H1 (cell line): ENCODE measurements at regions of chr14 and their contacts with region 1.

Region 1: GRCh38 chr14:77245820-77246219 is 25.2 kb downstream of the NGB start:
- DNase-seq: no peak
- H3K4me3 ChIP-seq: no peak overlapping the region
- H3K27ac ChIP-seq: no peak overlapping the region
- H3K4me1 ChIP-seq: no peaks in the 10 kb centered on the region; a peak in 1 of 7 replicates
- H3K27me3 ChIP-seq: no peaks in the 10 kb centered on the region
- CTCF ChIP-seq: peak in 2 of 3 experiments; percentile 50 to 64; a peak in 3 of 4 replicates
- EP300 ChIP-seq: no peak
- POLR2A ChIP-seq: no peak
- RAD21 ChIP-seq: peak; percentile 48 to 62; a peak in 3 of 4 replicates

Region 2: GRCh38 chr14:77186911-77187648 is 58.7 kb before region 1 on chr14:
- CTCF ChIA-PET with region 1: interaction called, 10 read pairs
- POLR2A ChIA-PET with region 1: interaction called, 3 read pairs
- DNase-seq: no peak
- H3K4me3 ChIP-seq: no peak overlapping the region
- H3K27ac ChIP-seq: no peak overlapping the region
- H3K4me1 ChIP-seq: peaks cover 0 to 10% (median 3%) of the 10 kb centered on the region in 4 experiments; a peak in 6 of 7 replicates
- H3K27me3 ChIP-seq: peaks cover 0 to 3% (median 1%) of the 10 kb centered on the region in 4 experiments; a peak in 3 of 7 replicates
- CTCF ChIP-seq: no peak
- EP300 ChIP-seq: no peak
- POLR2A ChIP-seq: no peak
- RAD21 ChIP-seq: no peak

Region 3: GRCh38 chr14:77228056-77228455 is 17.8 kb before region 1 on chr14:
- CTCF ChIA-PET with region 1: interaction called, 26 read pairs
- POLR2A ChIA-PET with region 1: no interaction called
- DNase-seq: no peak
- H3K4me3 ChIP-seq: no peak overlapping the region
- H3K27ac ChIP-seq: no peak overlapping the region
- H3K4me1 ChIP-seq: peaks cover 7 to 19% (median 11%) of the 10 kb centered on the region in 4 experiments
- H3K27me3 ChIP-seq: no peaks in the 10 kb centered on the region
- CTCF ChIP-seq: peak in 1 of 3 experiments; percentile 21; a peak in 1 of 4 replicates
- EP300 ChIP-seq: no peak
- POLR2A ChIP-seq: no peak
- RAD21 ChIP-seq: no peak

Region 4: GRCh38 chr14:77268989-77269600 is 23.3 kb after region 1 on chr14:
- CTCF ChIA-PET with region 1: interaction called, 11 read pairs
- POLR2A ChIA-PET with region 1: no interaction called
- DNase-seq: no peak
- H3K4me3 ChIP-seq: no peak overlapping the region
- H3K27ac ChIP-seq: no peak overlapping the region
- H3K4me1 ChIP-seq: peaks cover 0 to 9% (median 5%) of the 10 kb centered on the region in 4 experiments; a peak in 3 of 7 replicates
- H3K27me3 ChIP-seq: peaks cover 15 to 49% (median 41%) of the 10 kb centered on the region in 4 experiments
- CTCF ChIP-seq: no peak
- EP300 ChIP-seq: no peak
- POLR2A ChIP-seq: no peak
- RAD21 ChIP-seq: peak in 1 of 2 experiments; percentile 5; a peak in 1 of 4 replicates